IMR-90 (cell line): ENCODE measurements at regions of chr1 and their contacts with region 1.

Region 1: GRCh38 chr1:66242646-66243547 is 291.1 kb upstream of the SGIP1 start:
- DNase-seq: peak; percentile 87
- ATAC-seq: peak; percentile 87
- H3K4me3 ChIP-seq: no peak overlapping the region
- H3K27ac ChIP-seq: no peak overlapping the region
- H3K4me1 ChIP-seq: peaks cover 7% of the 10 kb centered on the region
- H3K27me3 ChIP-seq: no peaks in the 10 kb centered on the region
- CTCF ChIP-seq: peak; percentile 100; the same call in 1 of the 2 replicates
- POLR2A ChIP-seq: no peak
- RAD21 ChIP-seq: peak; percentile 95

Region 2: DNA sequence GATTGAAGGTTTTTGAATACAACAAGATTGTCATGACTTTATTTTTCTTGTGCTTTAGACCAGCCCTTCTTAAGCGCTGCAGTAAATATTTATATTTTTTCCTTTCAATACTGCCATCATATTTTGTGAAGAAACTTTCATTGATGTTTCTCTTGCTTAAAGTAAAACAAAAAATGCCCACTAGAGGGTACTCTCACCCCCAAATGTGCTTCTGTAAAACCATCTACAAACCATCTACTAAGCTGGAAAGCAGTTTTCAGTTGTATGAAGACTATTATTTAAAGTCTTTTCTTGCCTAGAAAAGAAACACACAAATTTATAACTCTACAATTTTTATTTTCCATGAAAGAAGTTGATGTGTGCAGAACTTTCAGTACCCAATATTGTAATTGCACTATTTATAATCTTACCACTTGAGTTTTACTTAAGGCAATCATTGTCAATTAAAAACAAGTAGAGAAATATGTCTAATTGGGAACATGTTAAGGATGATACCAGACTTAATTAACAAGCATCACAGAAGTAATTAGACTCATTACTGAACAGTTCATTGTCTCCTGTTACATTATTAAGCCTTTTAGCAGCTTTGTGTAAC is 811.7 kb before region 1 on chr1:
- CTCF ChIA-PET with region 1: no interaction called
- POLR2A ChIA-PET with region 1: no interaction called
- dilution Hi-C with region 1: no loop called
- in situ Hi-C with region 1: no loop called
- intact Hi-C with region 1: loop called (anchors 5 kb)
- DNase-seq: peak; percentile 55
- ATAC-seq: peak; percentile 53
- H3K4me3 ChIP-seq: no peak overlapping the region
- H3K27ac ChIP-seq: no peak overlapping the region
- H3K4me1 ChIP-seq: peaks cover 2% of the 10 kb centered on the region; the same call in 1 of the 2 replicates
- H3K27me3 ChIP-seq: no peaks in the 10 kb centered on the region
- CTCF ChIP-seq: peak; percentile 59
- POLR2A ChIP-seq: no peak
- RAD21 ChIP-seq: peak; percentile 62

Region 3: DNA sequence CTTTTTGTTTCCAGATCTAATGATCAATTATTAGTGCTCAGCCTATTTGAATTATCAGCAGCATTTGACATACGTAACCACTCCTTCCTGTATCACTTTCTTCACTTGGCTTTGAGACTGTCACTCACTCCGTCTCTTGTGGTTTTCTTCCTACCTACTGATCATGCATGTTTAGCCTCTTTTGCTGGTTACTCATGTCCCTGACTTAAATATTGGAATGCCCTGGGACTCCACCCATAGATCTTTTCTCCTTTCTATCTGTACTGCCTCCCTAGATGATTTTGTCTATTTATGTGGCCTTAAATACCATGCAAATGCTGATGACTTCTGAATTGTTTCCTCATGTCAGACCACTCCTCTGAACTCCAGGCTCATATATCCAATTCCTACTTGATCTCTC is 507.9 kb before region 1 on chr1:
- CTCF ChIA-PET with region 1: no interaction called
- POLR2A ChIA-PET with region 1: no interaction called
- dilution Hi-C with region 1: no loop called
- in situ Hi-C with region 1: loop called (anchors 25 kb)
- intact Hi-C with region 1: no loop called
- DNase-seq: peak; percentile 7
- ATAC-seq: no peak
- H3K4me3 ChIP-seq: no peak overlapping the region
- H3K27ac ChIP-seq: no peak overlapping the region
- H3K4me1 ChIP-seq: no peaks in the 10 kb centered on the region
- H3K27me3 ChIP-seq: no peaks in the 10 kb centered on the region
- CTCF ChIP-seq: no peak
- POLR2A ChIP-seq: no peak
- RAD21 ChIP-seq: no peak

Region 4: GRCh38 chr1:65948609-65949229 is 294.2 kb before region 1 on chr1:
- CTCF ChIA-PET with region 1: interaction called, 4 read pairs
- POLR2A ChIA-PET with region 1: no interaction called
- dilution Hi-C with region 1: no loop called
- in situ Hi-C with region 1: loop called (anchors 5 kb)
- intact Hi-C with region 1: no loop called
- DNase-seq: peak; percentile 79
- ATAC-seq: peak; percentile 86
- H3K4me3 ChIP-seq: no peak overlapping the region
- H3K27ac ChIP-seq: no peak overlapping the region
- H3K4me1 ChIP-seq: no peaks in the 10 kb centered on the region
- H3K27me3 ChIP-seq: no peaks in the 10 kb centered on the region
- CTCF ChIP-seq: peak; percentile 66
- POLR2A ChIP-seq: no peak
- RAD21 ChIP-seq: peak; percentile 85

Region 5: DNA sequence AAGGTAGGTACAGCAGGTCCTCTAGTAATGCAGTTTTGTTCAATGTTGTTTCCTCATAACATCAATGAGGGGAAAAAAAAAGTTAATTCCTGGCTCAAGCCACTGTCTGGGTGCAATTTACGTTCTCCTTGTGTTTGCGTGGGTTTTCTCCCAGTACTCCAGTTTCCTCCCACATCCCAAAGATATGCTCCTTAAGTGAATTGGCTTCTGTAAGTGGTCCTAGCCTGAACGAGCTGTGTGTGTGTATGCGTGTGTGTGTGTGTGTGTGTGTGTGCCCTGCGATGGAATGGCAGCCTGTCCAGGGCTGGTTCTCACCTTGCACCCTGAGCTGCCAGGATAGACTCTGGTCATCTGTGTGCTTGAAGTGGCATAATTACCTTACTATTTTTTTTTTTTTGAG is 118.2 kb before region 1 on chr1:
- CTCF ChIA-PET with region 1: no interaction called
- POLR2A ChIA-PET with region 1: no interaction called
- dilution Hi-C with region 1: no loop called
- in situ Hi-C with region 1: no loop called
- intact Hi-C with region 1: loop called (anchors 5 kb)
- DNase-seq: no peak
- ATAC-seq: no peak
- H3K4me3 ChIP-seq: no peak overlapping the region
- H3K27ac ChIP-seq: no peak overlapping the region
- H3K4me1 ChIP-seq: no peaks in the 10 kb centered on the region
- H3K27me3 ChIP-seq: no peaks in the 10 kb centered on the region
- CTCF ChIP-seq: no peak
- POLR2A ChIP-seq: no peak
- RAD21 ChIP-seq: no peak